ENCODE measurements at regions of chr12 and their contacts with region 1.

Region 1: GRCh38 chr12:57063991-57064685 is 14.2 kb upstream of the MYO1A start:
- DNase-seq: peak in 32 of 35 experiments; percentile 17 to 91 (median 61)
- ATAC-seq: peak; percentile 84 to 99 (median 88)
- H3K4me3 ChIP-seq: peak overlapping the region in 1 of 2 donors; percentile 26
- H3K4me3 Mint-ChIP-seq: peak overlapping the region; percentile 72 to 76 (median 75)
- H3K27ac ChIP-seq: peak overlapping the region; percentile 91
- H3K27ac Mint-ChIP-seq: peak overlapping the region; percentile 96 to 97
- H3K4me1 ChIP-seq: peaks cover 4 to 13% of the 10 kb centered on the region in 2 experiments
- H3K4me1 Mint-ChIP-seq: peaks cover 18 to 31% (median 29%) of the 10 kb centered on the region in 3 donors
- H3K27me3 ChIP-seq: no peaks in the 10 kb centered on the region
- H3K27me3 Mint-ChIP-seq: no peaks in the 10 kb centered on the region

Region 2: DNA sequence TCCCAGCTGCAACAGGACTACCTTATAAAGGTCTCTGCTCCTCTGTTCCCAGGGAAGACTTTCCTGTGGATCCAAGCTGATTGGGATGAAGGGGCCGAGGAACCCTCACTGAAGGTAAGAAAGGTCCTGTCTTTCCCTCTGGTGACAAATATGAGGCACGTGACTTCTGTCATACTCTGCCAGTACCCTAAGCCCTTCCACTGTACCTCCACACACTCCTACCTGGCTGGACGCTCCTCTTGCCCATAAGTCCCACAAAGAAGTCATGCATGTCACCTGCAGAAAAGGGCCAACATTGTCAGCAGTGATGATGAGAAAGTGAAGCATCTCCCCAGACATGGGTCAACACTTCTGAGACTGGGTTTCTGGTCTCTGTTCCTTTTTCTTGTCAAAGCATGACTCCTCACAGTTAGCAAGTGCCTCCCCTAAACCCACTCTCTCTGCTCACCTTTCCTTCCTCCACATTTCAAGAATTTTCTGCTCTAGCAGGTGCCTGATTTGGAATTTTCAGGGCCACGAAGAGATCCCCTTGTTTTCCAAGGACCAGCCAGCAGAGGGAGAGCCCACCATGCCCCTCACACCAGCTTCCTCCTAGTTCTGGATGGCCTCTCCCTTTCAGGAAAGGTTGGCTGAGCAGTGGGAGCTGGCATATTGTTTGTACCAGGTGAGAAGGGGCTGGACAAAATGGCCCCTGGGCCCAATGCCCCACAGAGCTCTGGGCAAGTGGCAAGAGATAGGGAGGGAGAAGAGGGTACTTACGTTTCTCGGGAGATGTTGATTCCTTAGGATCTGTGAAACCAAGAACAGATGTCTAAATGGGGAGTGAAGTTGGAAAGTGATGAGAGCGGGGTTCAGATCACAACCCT is 51.3 kb before region 1 on chr12:
- CTCF ChIA-PET with region 1: interaction called, 24 to 42 read pairs
- POLR2A ChIA-PET with region 1: no interaction called
- DNase-seq: no peak
- ATAC-seq: no peak
- H3K4me3 ChIP-seq: no peak overlapping the region
- H3K4me3 Mint-ChIP-seq: peak overlapping the region in 1 of 3 donors; percentile 2
- H3K27ac ChIP-seq: no peak overlapping the region
- H3K27ac Mint-ChIP-seq: peak overlapping the region in 1 of 2 donors; percentile 40
- H3K4me1 ChIP-seq: peaks cover 15 to 17% of the 10 kb centered on the region in 2 experiments
- H3K4me1 Mint-ChIP-seq: peaks cover 24 to 68% (median 43%) of the 10 kb centered on the region in 3 donors
- H3K27me3 ChIP-seq: peaks cover 0 to 20% of the 10 kb centered on the region in 2 experiments
- H3K27me3 Mint-ChIP-seq: peaks cover 0 to 14% of the 10 kb centered on the region in 2 donors

Region 3: GRCh38 chr12:57151741-57152630 is 87.8 kb after region 1 on chr12:
- CTCF ChIA-PET with region 1: no interaction called
- POLR2A ChIA-PET with region 1: no interaction called
- DNase-seq: no peak
- ATAC-seq: no peak
- H3K4me3 ChIP-seq: no peak overlapping the region
- H3K4me3 Mint-ChIP-seq: no peak overlapping the region
- H3K27ac ChIP-seq: no peak overlapping the region
- H3K27ac Mint-ChIP-seq: no peak overlapping the region
- H3K4me1 ChIP-seq: no peaks in the 10 kb centered on the region
- H3K4me1 Mint-ChIP-seq: no peaks in the 10 kb centered on the region
- H3K27me3 ChIP-seq: peaks cover 0 to 13% of the 10 kb centered on the region in 2 experiments
- H3K27me3 Mint-ChIP-seq: peaks cover 0 to 2% of the 10 kb centered on the region in 2 donors